Panc1 (cell line): ENCODE measurements at regions of chr16 and their contacts with region 1.

Region 1: GRCh38 chr16:68843482-68844210 is at the start of gene TANGO6:
- DNase-seq: peak; percentile 12
- ATAC-seq: peak; percentile 97
- H3K4me3 ChIP-seq: peak within 1 kb of the TSS; percentile 83 to 87
- H3K27ac ChIP-seq: peak within 1 kb of the TSS; percentile 90
- H3K4me1 ChIP-seq: peaks cover 4% of the 10 kb centered on the region
- H3K27me3 ChIP-seq: no peaks in the 10 kb centered on the region
- CTCF ChIP-seq: no peak; the same call in 1 of the 2 replicates
- total RNA-seq, gene TANGO6: 11.0 TPM

Region 2: GRCh38 chr16:68396481-68396880 is 447.2 kb before region 1 on chr16:
- CTCF ChIA-PET with region 1: no interaction called
- POLR2A ChIA-PET with region 1: interaction called, 15 read pairs
- in situ Hi-C with region 1: no loop called
- intact Hi-C with region 1: no loop called
- DNase-seq: no peak
- ATAC-seq: no peak
- H3K4me3 ChIP-seq: no peak overlapping the region
- H3K27ac ChIP-seq: no peak overlapping the region
- H3K4me1 ChIP-seq: no peaks in the 10 kb centered on the region
- H3K27me3 ChIP-seq: no peaks in the 10 kb centered on the region
- CTCF ChIP-seq: no peak; the same call in 1 of the 2 replicates

Region 3: DNA sequence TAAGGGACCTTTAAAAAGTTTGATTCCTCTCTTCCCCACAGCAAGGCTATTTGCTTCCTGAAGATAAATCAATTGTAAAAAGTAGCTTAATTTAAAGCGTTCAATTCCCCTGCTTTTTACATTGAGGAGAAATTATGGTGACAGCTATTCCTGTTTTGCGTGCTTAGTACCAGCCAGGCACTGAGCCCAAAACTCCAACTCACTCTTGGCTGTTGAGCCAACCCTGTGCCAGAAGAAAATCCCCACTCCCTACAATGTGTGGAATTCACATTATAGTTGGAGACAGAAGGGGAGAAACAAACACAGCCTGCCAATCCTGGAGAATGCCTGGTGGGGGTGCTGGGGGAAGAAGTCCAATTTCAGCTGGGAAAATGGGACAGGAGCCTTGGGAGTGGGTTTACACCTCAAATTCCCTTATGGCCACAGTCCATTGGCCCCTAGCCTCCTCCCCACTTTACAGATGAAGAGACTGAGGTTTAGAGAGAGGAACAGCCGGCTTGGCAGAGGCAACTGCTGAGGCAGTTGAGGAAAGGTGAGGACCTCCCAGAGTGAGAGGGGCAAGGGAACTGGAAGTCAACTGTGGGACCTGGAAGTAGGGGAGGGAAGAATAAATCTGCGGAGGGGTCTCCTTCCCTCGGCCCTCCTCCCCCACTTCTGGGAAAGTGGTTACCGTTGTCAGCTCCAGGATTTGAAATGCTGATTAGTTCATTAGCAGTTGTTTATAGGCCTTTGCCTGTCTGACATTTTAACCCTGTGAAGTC is 80.5 kb before region 1 on chr16:
- CTCF ChIA-PET with region 1: no interaction called
- POLR2A ChIA-PET with region 1: no interaction called
- in situ Hi-C with region 1: no loop called
- intact Hi-C with region 1: no loop called
- DNase-seq: no peak
- ATAC-seq: no peak; the same call in 1 of the 2 replicates
- H3K4me3 ChIP-seq: no peak overlapping the region
- H3K27ac ChIP-seq: 0 out of 2 replicates have a peak overlapping the region, but pooled peaks have one; percentile 12
- H3K4me1 ChIP-seq: peaks cover 10% of the 10 kb centered on the region
- H3K27me3 ChIP-seq: no peaks in the 10 kb centered on the region
- CTCF ChIP-seq: no peak

Region 4: DNA sequence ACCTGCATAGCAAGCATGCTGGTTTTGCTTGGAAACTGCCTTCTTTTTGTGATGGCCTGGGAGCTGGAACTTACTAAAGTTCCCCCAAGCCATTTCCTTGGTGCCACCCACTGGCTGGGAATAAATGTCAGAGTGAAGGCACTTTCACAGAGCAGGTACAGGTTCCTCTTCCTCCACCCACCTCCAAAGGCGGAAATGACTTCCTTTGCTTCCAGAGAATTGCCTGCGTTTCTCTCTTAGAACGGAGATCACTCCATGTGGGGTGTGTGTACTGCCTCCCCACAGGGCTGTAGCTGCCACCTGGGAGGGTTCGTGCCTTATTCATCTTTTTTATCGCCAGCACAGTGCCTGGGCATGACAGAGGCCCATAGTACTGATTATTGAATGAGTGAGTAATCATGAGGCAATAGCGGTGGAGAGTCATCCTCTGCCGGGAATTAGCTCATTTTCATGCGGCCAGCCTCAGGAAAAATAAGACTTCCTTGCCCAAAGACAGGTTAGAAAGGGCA is 229.6 kb after region 1 on chr16:
- CTCF ChIA-PET with region 1: interaction called, 10 read pairs
- POLR2A ChIA-PET with region 1: no interaction called
- in situ Hi-C with region 1: no loop called
- intact Hi-C with region 1: no loop called
- DNase-seq: peak; percentile 87
- ATAC-seq: peak; percentile 92
- H3K4me3 ChIP-seq: peak overlapping the region in 1 of 2 experiments; percentile 17; a peak in 2 of 4 replicates
- H3K27ac ChIP-seq: peak overlapping the region; percentile 59
- H3K4me1 ChIP-seq: peaks cover 31% of the 10 kb centered on the region
- H3K27me3 ChIP-seq: no peaks in the 10 kb centered on the region
- CTCF ChIP-seq: no peak

Region 5: DNA sequence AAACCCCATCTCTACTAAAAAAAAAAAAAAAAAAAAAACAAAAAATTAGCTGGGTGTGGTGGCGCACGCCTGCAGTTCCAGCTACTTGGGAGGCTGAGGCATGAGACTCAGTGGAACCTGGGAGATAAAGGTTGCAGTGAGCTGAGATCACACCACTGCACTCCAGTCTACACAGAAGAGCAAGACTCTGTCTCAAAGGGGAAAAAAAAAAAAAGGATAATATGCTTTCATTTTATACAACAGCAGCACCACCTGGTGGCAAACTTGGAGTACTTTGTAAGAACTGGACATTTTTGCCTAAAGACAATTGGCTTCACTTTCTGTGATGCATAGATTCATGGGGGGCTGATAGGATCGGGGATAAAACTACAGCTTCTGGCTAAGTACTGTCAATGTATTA is 280.3 kb after region 1 on chr16:
- CTCF ChIA-PET with region 1: no interaction called
- POLR2A ChIA-PET with region 1: interaction called, 14 read pairs
- in situ Hi-C with region 1: no loop called
- intact Hi-C with region 1: no loop called
- DNase-seq: no peak
- ATAC-seq: no peak; the same call in 1 of the 2 replicates
- H3K4me3 ChIP-seq: no peak overlapping the region
- H3K27ac ChIP-seq: no peak overlapping the region
- H3K4me1 ChIP-seq: no peaks in the 10 kb centered on the region
- H3K27me3 ChIP-seq: no peaks in the 10 kb centered on the region
- CTCF ChIP-seq: peak; percentile 67